Posterior vena cava (tissue), 2 donors: ENCODE measurements at regions of chr11 and their contacts with region 1.

Region 1: GRCh38 chr11:118918128-118918685 is 7.5 kb downstream of the BCL9L start:
- DNase-seq: peak; percentile 97

Region 2: DNA sequence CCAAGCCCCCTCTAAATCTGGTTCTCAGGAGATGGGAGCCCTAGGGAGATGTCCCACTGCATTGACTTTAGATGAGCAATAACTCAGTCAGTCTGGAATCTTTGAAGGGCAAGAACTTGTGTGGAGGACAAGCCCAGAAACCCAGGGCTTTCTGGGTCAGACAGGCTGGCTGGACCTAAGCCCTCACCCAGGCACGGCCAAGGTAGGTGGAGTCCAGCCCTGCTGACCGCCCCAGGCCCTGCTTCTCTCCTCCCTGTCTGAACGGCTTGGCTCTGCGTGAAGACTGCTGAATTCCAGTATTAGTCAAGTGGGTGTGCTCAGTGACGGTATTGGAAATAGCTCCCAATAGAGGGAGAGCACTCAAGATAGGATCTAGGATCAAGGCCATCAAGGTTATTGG is 28.4 kb before region 1 on chr11:
- intact Hi-C with region 1: no loop called
- DNase-seq: peak; percentile 96

Region 3: DNA sequence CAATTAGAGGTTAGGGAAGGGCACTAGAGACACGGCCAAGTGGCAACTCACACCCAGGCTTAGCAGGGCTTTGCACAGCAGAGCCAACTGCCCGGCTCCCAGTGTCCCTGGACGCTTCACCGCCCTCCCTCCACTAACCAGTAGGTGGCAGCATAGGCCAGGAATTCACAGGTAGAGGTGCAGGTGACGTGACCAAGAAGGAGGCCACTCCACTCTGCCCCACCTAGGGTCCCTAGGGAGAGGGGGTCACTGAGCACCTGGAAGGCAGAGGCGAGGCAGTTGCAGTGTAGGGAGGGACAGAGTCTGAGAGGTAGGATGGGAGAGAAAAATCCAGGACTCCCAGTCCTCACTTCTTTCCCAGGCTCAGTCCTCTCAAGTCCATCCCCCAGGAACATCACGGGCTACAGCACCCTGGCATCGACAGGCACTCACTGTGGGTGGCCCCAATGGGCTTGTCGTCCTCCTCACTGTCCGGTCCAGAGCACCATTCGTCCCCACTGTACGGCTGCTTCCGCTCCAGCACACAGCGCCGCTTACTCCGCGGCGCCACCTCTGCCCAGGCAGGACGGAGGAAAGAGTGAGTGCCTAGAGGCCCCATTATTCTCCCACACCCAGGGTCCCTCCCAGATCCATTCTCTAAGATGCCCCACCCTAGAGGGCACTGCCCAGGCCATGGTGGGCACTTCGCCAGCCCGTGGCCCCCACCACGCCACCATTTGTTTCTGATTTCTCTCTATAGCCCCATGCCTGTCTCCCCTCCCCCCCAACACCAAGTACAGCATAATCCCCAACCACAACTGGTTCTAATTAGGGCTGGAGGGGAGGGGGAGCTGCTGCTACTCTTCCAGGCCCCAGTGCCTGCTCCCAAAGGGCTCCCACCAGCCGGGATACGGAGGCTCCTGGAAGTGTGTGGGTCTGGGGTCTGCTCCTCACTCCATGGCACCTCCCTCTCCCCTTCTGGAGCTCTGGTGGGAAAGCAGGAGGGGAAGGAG is 10.9 kb before region 1 on chr11:
- intact Hi-C with region 1: loop called in 1 of 2 experiments (anchors 2 kb)
- DNase-seq: peak; percentile 93